Endothelial cell of umbilical vein (primary cell): ENCODE measurements at regions of chr1 and their contacts with region 1.

Region 1: DNA sequence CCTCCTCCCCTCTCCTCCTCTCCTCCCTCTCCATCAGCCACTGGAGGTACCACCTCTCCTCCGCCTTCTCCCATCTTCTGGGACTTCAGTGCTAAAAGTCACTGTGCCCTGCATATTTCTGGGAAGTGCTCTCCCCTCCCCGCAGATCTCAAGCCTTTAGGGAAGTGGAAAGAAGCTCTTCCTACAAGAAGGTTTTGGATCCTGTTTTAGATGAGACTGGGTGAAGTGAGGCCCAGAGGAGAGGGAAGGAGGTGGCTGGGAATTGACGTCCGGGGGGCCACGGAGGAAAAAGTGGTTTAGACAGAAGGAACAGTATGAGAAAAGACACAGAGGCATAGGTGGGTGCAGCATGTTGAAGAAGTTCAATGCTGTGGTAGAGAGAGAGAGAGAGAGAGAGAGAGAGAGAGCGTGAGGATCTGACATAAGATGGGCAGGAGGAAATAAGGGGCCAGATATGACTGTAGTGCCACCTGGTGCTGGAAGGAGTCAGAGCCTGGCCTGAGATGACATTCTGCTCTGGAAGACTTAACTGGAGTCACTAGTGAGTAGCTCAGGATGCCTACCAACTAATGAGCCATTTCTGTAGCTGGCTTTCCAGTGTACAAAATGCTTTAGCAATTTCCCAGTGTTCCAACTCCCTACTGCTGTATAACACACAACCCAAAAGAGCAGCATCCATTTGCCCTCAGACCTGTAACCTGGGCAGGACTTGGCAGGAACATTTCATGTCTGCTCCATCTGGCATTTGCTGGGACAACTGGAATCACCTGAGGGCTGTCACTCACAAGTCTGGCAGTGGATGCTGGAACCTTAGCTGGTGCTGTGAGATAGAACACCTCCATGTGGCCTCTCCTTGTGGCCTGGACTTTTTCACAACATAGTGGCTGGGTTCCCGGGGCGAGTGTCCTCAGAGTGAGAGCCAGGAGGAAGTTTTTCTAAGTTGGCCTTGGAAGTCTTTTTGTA is 16.6 kb upstream of the ZSCAN20 start:
- DNase-seq: peak; percentile 67
- H3K4me3 ChIP-seq: no peak overlapping the region
- H3K27ac ChIP-seq: no peak overlapping the region
- H3K4me1 ChIP-seq: peaks cover 10% of the 10 kb centered on the region
- H3K27me3 ChIP-seq: no peaks in the 10 kb centered on the region
- CTCF ChIP-seq: peak; percentile 68 to 69
- POLR2A ChIP-seq: no peak

Region 2: DNA sequence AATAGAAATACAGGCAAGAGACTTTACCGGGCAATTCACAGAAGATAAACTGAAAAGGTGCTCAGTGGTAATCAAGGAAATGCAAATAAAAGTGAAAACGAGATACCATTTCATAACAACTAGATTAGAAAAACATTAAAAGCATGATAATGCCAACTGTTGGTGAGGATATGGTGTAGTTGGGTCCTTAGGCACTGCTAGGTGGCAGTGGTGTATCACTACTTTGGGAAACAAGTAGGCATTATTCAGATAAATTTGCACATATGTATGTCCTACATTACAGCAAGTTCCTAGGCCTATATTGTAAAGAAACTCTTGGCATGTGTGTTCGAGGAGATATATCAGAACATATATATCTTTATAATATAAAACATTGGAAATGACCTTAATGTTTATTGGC is 343.9 kb before region 1 on chr1:
- CTCF ChIA-PET with region 1: interaction called, 3 read pairs
- POLR2A ChIA-PET with region 1: no interaction called
- dilution Hi-C with region 1: no loop called
- intact Hi-C with region 1: loop called (anchors 5 kb)
- DNase-seq: peak; percentile 49
- H3K4me3 ChIP-seq: no peak overlapping the region
- H3K27ac ChIP-seq: no peak overlapping the region
- H3K4me1 ChIP-seq: no peaks in the 10 kb centered on the region
- H3K27me3 ChIP-seq: peaks cover 2 to 12% of the 10 kb centered on the region in 2 experiments
- CTCF ChIP-seq: peak in 1 of 2 donors; percentile 36
- POLR2A ChIP-seq: no peak

Region 3: DNA sequence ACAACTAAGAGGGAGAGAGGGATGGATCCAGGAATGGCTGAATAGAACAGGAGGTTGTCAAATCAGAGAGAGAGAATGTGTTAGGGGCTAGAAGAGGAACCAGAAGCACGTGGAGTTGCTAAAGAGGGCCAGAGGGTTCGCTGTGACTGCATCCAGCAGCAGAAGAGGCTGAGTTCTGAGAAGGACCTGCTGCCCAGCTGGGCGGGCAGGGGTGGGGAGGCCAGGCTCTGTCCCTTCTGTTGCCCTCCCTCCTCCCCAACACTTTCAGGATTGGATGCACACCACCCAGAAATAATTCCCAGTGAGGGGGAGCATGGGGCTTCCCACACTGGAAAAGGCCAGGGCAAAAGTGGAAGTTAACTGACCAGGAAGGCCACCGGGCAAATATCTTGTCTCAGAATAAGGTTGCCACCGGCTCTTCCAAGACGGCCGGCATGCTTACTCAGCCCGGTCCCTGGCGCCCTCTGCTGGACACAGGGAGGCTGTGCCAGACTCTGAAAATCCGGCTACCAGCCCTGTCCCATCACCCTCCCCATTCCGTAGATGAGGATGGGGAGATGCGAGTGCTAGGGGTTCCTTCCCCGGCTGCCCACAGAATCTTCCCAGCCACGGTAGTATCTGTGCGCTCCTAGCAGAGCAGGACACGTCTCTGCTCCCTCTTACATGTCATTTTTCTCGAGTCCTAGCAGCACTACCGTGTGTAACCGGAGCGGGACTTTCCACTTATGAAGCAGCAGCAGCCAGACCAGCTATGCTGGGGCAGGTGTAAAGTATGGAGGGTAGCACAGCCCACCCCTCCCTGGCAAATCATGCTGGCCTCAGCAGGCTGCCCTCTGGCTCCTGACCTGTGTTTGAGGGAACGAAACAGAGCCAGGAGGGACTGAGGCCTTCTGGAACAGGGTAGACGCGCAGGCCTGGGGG is 88.1 kb before region 1 on chr1:
- CTCF ChIA-PET with region 1: interaction called, 26 read pairs
- POLR2A ChIA-PET with region 1: no interaction called
- dilution Hi-C with region 1: no loop called
- intact Hi-C with region 1: loop called (anchors 5 kb)
- DNase-seq: peak; percentile 67
- H3K4me3 ChIP-seq: no peak overlapping the region
- H3K27ac ChIP-seq: no peak overlapping the region
- H3K4me1 ChIP-seq: no peaks in the 10 kb centered on the region
- H3K27me3 ChIP-seq: no peaks in the 10 kb centered on the region
- CTCF ChIP-seq: peak; percentile 90 to 98
- POLR2A ChIP-seq: no peak

Region 4: GRCh38 chr1:33392639-33393038 is 63.2 kb before region 1 on chr1:
- CTCF ChIA-PET with region 1: no interaction called
- POLR2A ChIA-PET with region 1: no interaction called
- dilution Hi-C with region 1: no loop called
- intact Hi-C with region 1: loop called (anchors 5 kb)
- DNase-seq: no peak
- H3K4me3 ChIP-seq: no peak overlapping the region
- H3K27ac ChIP-seq: no peak overlapping the region
- H3K4me1 ChIP-seq: no peaks in the 10 kb centered on the region
- H3K27me3 ChIP-seq: no peaks in the 10 kb centered on the region
- CTCF ChIP-seq: no peak
- POLR2A ChIP-seq: no peak

Region 5: GRCh38 chr1:33443705-33444180 is 12.1 kb before region 1 on chr1:
- CTCF ChIA-PET with region 1: interaction called, 26 read pairs
- POLR2A ChIA-PET with region 1: no interaction called
- dilution Hi-C with region 1: no loop called
- intact Hi-C with region 1: no loop called
- DNase-seq: no peak
- H3K4me3 ChIP-seq: no peak overlapping the region
- H3K27ac ChIP-seq: no peak overlapping the region
- H3K4me1 ChIP-seq: peaks cover 17% of the 10 kb centered on the region
- H3K27me3 ChIP-seq: no peaks in the 10 kb centered on the region
- CTCF ChIP-seq: no peak
- POLR2A ChIP-seq: no peak